Brain microvascular endothelial cell (primary cell): ENCODE measurements at regions of chr11 and their contacts with region 1.

Region 1: GRCh38 chr11:17730608-17731462 is 3.7 kb upstream of the KCNC1 start:
- DNase-seq: peak; percentile 57
- H3K4me3 ChIP-seq: no peak overlapping the region
- H3K27ac ChIP-seq: no peak overlapping the region
- H3K27me3 ChIP-seq: peaks cover 5% of the 10 kb centered on the region
- CTCF ChIP-seq: peak; percentile 95

Region 2: GRCh38 chr11:17423533-17424310 is 307.1 kb before region 1 on chr11:
- in situ Hi-C with region 1: no loop called
- DNase-seq: no peak
- H3K4me3 ChIP-seq: no peak overlapping the region
- H3K27ac ChIP-seq: no peak overlapping the region
- H3K27me3 ChIP-seq: peaks cover 2% of the 10 kb centered on the region
- CTCF ChIP-seq: no peak

Region 3: DNA sequence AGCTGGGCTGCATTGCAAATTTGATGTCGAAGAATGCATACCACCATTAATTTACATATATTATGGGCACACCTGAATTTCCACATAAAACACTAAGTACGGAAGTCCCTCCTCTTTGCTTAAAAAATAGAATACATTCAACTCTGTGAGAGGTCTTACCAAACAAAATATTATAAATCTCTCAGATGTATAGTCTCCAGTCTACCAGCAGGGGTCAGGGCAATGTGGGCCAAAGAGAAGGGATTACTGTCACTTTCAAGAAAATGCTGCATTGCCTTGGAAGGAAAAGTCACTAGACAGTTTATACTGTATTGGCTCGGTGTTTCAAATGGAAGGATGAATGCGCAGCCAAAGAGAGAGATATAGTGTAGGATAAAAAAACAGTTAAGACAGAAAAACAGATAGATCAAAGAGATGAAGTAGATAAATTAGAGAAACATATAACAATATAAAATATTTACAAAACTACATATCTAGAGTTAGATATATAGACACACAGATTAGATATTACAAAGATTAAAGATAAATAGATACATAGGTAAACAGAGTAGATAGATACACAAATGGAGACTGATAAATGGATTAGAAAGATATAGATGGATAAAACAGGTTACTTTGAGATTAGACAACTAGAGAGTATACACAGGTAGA is 261.1 kb after region 1 on chr11:
- in situ Hi-C with region 1: loop called (anchors 25 kb)
- DNase-seq: no peak
- H3K4me3 ChIP-seq: no peak overlapping the region
- H3K27ac ChIP-seq: no peak overlapping the region
- H3K27me3 ChIP-seq: no peaks in the 10 kb centered on the region
- CTCF ChIP-seq: peak; percentile 91